ENCODE measurements at regions of chr7 and their contacts with region 1.

Region 1: DNA sequence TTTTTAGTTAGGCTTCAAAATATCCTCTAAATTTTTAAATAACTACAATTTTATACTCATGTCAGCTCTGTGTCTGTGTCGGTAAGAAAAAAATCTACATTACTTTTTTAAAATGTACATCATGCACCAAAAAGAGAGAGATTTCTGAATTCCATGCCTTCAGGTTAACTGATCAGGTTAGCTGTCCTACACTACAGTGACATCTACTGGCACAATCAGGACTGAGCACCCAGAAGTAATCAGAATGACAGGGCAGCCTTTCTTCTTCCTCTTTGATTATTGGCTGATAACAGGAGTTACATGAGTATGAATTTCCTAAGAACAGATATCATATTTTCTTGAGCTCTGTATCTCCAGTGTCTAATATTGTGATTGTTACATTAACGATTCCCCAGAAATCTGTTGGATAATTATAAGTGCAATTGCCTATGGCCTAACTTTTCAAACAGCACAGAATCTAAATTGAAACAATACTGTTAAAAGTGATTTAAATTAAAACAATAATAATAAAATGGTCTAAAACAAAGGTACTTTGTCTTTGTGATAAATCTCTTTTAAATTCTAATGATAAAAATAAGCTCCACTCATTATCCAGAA is 41.8 kb upstream of the HYCC1 start:
- DNase-seq: peak; percentile 61 to 68 (median 66)
- H3K4me3 ChIP-seq: no peak overlapping the region
- H3K4me3 Mint-ChIP-seq: no peak overlapping the region
- H3K27ac ChIP-seq: no peak overlapping the region
- H3K27ac Mint-ChIP-seq: no peak overlapping the region
- H3K4me1 ChIP-seq: no peaks in the 10 kb centered on the region
- H3K4me1 Mint-ChIP-seq: peaks cover 0 to 2% (median 0%) of the 10 kb centered on the region in 4 donors
- H3K27me3 ChIP-seq: no peaks in the 10 kb centered on the region
- H3K27me3 Mint-ChIP-seq: peaks cover 1 to 2% of the 10 kb centered on the region in 2 donors

Region 2: DNA sequence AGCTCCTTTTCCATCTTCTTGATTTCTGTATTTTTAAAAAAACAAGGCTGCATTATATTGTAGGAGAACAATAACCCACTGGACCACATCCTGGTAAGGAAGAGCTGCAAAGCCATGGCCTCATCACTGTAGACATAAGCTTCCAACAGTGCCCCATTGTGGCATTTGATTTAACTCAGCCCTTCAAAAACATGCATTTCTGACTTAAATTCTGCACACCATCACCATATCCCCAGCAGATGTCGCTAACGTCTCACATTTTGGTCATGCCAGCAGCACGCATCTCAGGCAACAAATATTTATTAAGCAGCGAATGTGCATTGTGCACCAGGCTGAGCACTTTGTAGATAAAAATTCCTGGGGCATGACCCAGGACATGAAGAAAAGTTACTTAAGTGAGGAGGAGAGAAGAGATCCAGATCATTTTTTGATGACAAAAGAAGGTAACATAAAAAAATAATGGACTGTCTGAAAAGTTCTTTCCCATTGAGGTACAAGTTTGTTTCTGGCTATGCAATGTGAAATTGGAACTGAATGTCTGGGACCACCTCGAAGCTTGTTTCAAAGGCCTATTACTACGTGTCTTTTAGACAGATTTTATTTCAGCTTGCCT is 945.3 kb before region 1 on chr7:
- CTCF ChIA-PET with region 1: interaction called, 3 read pairs
- POLR2A ChIA-PET with region 1: no interaction called
- intact Hi-C with region 1: loop called (anchors 2 kb)
- DNase-seq: peak; percentile 61 to 68 (median 63)
- H3K4me3 ChIP-seq: no peak overlapping the region
- H3K4me3 Mint-ChIP-seq: no peak overlapping the region
- H3K27ac ChIP-seq: no peak overlapping the region
- H3K27ac Mint-ChIP-seq: peak overlapping the region in 1 of 7 donors; percentile 63
- H3K4me1 ChIP-seq: no peaks in the 10 kb centered on the region
- H3K4me1 Mint-ChIP-seq: no peaks in the 10 kb centered on the region
- H3K27me3 ChIP-seq: no peaks in the 10 kb centered on the region
- H3K27me3 Mint-ChIP-seq: peaks cover 0 to 4% of the 10 kb centered on the region in 2 donors

Region 3: GRCh38 chr7:22782616-22783232 is 273.0 kb before region 1 on chr7:
- CTCF ChIA-PET with region 1: interaction called, 33 read pairs
- POLR2A ChIA-PET with region 1: no interaction called
- intact Hi-C with region 1: loop called (anchors 1 kb)
- DNase-seq: peak; percentile 53 to 62 (median 58)
- H3K4me3 ChIP-seq: no peak overlapping the region
- H3K4me3 Mint-ChIP-seq: no peak overlapping the region
- H3K27ac ChIP-seq: no peak overlapping the region
- H3K27ac Mint-ChIP-seq: no peak overlapping the region
- H3K4me1 ChIP-seq: no peaks in the 10 kb centered on the region
- H3K4me1 Mint-ChIP-seq: no peaks in the 10 kb centered on the region
- H3K27me3 ChIP-seq: no peaks in the 10 kb centered on the region
- H3K27me3 Mint-ChIP-seq: no peaks in the 10 kb centered on the region

Region 4: GRCh38 chr7:22952286-22953015 is 103.2 kb before region 1 on chr7:
- CTCF ChIA-PET with region 1: interaction called, 10 read pairs
- POLR2A ChIA-PET with region 1: no interaction called
- intact Hi-C with region 1: no loop called
- DNase-seq: no peak
- H3K4me3 ChIP-seq: no peak overlapping the region
- H3K4me3 Mint-ChIP-seq: no peak overlapping the region
- H3K27ac ChIP-seq: no peak overlapping the region
- H3K27ac Mint-ChIP-seq: no peak overlapping the region
- H3K4me1 ChIP-seq: no peaks in the 10 kb centered on the region
- H3K4me1 Mint-ChIP-seq: no peaks in the 10 kb centered on the region
- H3K27me3 ChIP-seq: no peaks in the 10 kb centered on the region
- H3K27me3 Mint-ChIP-seq: no peaks in the 10 kb centered on the region

Region 5: DNA sequence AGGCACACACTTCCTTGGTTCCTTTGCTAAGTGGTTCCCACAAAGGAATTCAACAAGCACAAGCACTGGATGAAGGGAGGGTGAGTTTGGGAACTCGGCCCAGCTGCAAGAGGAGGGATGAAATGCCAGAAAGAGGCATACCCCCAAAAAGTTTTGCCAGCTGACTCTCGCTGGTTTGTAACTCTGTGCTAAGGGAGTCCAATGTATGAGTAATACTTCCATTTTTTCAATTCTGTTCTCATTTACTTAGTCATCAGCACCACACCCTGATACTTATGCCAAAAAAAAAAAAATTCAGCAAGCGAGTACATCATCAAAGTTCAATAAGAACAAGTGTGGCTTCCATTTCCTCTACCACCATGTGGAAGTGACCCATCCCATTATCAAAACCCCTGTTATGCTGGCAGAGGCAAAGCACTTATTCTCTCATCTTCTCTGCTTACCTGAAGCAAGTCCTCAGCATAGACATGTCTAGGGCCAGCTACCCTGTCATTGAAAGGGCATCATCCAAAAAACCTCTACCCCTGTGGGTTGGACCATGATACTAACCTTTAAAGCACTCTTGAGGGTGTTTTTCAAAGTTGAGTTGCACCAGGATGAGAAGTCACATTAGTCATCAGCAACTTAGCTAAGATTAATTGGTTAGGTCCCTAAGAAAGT is 34.8 kb before region 1 on chr7:
- CTCF ChIA-PET with region 1: interaction called, 20 read pairs
- POLR2A ChIA-PET with region 1: no interaction called
- intact Hi-C with region 1: no loop called
- DNase-seq: peak; percentile 21 to 46 (median 39)
- H3K4me3 ChIP-seq: no peak overlapping the region
- H3K4me3 Mint-ChIP-seq: peak overlapping the region in 4 of 8 donors; percentile 15 to 47 (median 31)
- H3K27ac ChIP-seq: no peak overlapping the region
- H3K27ac Mint-ChIP-seq: peak overlapping the region in 6 of 7 donors; percentile 12 to 81 (median 51)
- H3K4me1 ChIP-seq: peaks cover 26% of the 10 kb centered on the region
- H3K4me1 Mint-ChIP-seq: peaks cover 15 to 30% (median 24%) of the 10 kb centered on the region in 4 donors
- H3K27me3 ChIP-seq: no peaks in the 10 kb centered on the region
- H3K27me3 Mint-ChIP-seq: peaks cover 0 to 2% of the 10 kb centered on the region in 2 donors

Region 6: DNA sequence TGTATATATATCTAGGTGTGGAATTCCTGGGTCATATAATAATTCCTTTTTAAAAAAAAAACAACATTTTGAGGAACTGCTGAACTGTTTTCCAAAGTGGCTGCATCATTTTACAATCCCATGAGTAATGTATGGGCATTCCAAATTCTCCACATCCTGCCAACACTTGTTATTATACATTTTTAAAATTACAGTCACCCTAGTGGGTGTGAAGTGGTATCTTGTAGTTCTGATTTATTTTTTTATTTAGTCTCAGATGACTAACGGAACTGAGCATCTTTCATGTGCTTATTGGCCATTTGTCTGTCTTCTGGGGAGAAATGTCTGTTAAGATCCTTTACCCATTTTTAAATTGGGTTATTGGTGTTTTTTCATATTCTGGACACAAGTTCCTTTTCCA is 37.9 kb after region 1 on chr7:
- CTCF ChIA-PET with region 1: interaction called, 25 read pairs
- POLR2A ChIA-PET with region 1: no interaction called
- intact Hi-C with region 1: no loop called
- DNase-seq: no peak
- H3K4me3 ChIP-seq: no peak overlapping the region
- H3K4me3 Mint-ChIP-seq: no peak overlapping the region
- H3K27ac ChIP-seq: no peak overlapping the region
- H3K27ac Mint-ChIP-seq: no peak overlapping the region
- H3K4me1 ChIP-seq: no peaks in the 10 kb centered on the region
- H3K4me1 Mint-ChIP-seq: no peaks in the 10 kb centered on the region
- H3K27me3 ChIP-seq: no peaks in the 10 kb centered on the region
- H3K27me3 Mint-ChIP-seq: peaks cover 4 to 8% of the 10 kb centered on the region in 2 donors

Region 7: GRCh38 chr7:23315366-23315765 is 259.7 kb after region 1 on chr7:
- CTCF ChIA-PET with region 1: no interaction called
- POLR2A ChIA-PET with region 1: no interaction called
- intact Hi-C with region 1: no loop called
- DNase-seq: no peak
- H3K4me3 ChIP-seq: no peak overlapping the region
- H3K4me3 Mint-ChIP-seq: no peak overlapping the region
- H3K27ac ChIP-seq: no peak overlapping the region
- H3K27ac Mint-ChIP-seq: no peak overlapping the region
- H3K4me1 ChIP-seq: no peaks in the 10 kb centered on the region
- H3K4me1 Mint-ChIP-seq: no peaks in the 10 kb centered on the region
- H3K27me3 ChIP-seq: no peaks in the 10 kb centered on the region
- H3K27me3 Mint-ChIP-seq: peaks cover 5 to 8% of the 10 kb centered on the region in 2 donors

Measured in CD4-positive, alpha-beta memory T cell (primary cell).